ENCODE measurements at regions of chr1 and their contacts with region 1.

Region 1: DNA sequence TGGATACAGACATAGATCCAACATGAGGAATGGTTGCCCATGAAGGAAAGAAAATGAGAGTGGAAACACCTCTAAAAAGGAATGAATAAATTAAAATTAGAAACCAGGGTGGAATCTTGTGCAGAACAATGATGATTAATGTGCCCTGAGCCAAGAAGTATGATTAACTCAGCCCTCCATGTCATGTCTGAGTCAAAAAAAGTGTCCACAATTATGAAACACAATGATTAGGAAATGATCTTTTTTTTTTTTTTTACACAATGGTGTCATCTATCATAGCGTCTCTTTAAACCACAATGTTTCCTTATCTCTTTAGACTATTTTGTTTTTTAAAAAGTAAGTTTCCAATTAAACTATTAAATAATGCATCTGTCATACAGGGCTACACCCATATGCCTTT is 78.9 kb upstream of the RAB4A start:
- DNase-seq: peak; percentile 94
- H3K4me3 Mint-ChIP-seq: peak overlapping the region; percentile 35
- H3K27ac Mint-ChIP-seq: peak overlapping the region; percentile 80
- H3K4me1 Mint-ChIP-seq: peaks cover 41% of the 10 kb centered on the region
- H3K27me3 Mint-ChIP-seq: no peaks in the 10 kb centered on the region
- CTCF ChIP-seq: no peak

Region 2: DNA sequence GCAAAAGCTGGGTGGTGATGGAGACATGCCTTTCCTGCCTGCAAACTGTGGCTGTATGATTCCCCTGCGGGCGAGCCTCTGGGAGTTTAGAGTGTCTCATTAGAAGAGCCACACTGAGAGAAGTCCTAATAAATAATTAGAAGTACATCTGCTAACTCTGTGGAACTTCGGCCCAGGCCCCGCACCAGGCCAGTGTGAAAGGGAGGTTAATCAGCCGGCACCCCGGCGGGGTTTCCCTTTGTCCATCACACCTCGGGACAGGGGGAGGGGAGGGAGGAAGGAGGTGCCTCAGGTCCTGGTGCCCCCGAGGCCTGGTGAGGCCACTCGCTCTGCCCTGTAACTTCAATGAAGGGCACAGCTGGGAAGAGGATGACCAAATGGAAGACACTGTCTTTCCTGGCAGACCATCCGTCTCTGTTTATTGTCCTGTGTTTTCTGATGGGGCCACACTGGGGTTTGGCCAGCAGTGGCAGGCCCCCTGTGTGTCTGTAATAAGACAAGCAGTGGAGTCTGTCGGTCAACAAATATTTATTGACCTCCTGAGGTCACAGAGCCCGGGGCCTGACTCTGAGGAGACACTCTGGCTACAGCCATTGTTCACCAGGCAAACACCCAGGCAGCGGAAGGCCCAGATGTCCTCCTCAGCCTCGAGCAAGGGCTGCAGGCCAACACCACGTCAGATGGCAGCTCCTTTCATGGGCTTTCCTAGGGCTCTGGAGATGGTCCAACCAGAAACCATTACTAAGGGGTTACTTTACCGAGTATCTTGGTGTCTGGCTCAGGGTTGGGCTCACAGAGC is 188.6 kb before region 1 on chr1:
- CTCF ChIA-PET with region 1: no interaction called
- POLR2A ChIA-PET with region 1: no interaction called
- intact Hi-C with region 1: no loop called
- DNase-seq: peak; percentile 56
- H3K4me3 Mint-ChIP-seq: no peak overlapping the region
- H3K27ac Mint-ChIP-seq: no peak overlapping the region
- H3K4me1 Mint-ChIP-seq: peaks cover 19% of the 10 kb centered on the region
- H3K27me3 Mint-ChIP-seq: no peaks in the 10 kb centered on the region
- CTCF ChIP-seq: no peak

Region 3: DNA sequence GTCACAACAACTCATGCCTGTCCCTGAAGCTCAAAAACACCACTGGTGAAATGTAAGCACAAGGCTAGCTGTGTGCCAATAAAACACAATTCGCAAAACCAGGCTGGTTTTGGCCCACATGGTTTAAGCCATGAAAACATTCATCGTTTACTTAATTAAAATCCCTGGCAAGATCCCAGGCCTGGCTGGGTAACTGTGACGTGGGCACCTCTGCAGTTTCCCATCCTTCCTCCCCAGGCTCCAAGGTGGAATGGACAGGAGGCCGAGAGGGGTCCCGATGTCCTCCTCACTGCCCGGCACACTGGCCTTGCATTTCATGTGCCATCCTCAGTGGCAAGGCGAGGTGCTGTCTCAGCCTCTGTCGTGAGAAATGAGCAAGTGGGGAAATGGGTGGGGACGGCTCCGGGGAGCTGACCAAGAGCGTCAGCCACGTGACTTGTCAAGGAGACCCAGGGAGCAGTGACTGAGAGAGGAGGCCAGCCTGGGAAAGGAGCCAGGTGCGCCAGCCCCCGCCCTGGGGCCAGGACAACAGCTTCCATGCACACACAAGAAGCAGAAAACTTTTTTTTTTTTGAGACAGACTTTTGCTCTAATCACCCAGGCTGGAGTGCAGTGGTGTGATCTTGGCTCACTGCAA is 74.2 kb before region 1 on chr1:
- CTCF ChIA-PET with region 1: no interaction called
- POLR2A ChIA-PET with region 1: interaction called, 14 read pairs
- intact Hi-C with region 1: no loop called
- DNase-seq: peak; percentile 98
- H3K4me3 Mint-ChIP-seq: peak overlapping the region; percentile 15
- H3K27ac Mint-ChIP-seq: peak overlapping the region; percentile 55
- H3K4me1 Mint-ChIP-seq: peaks cover 26% of the 10 kb centered on the region
- H3K27me3 Mint-ChIP-seq: no peaks in the 10 kb centered on the region
- CTCF ChIP-seq: no peak

Region 4: GRCh38 chr1:229203030-229203751 is 11.2 kb after region 1 on chr1:
- CTCF ChIA-PET with region 1: interaction called, 3 read pairs
- POLR2A ChIA-PET with region 1: interaction called, 11 read pairs
- intact Hi-C with region 1: no loop called
- DNase-seq: peak; percentile 86
- H3K4me3 Mint-ChIP-seq: no peak overlapping the region
- H3K27ac Mint-ChIP-seq: no peak overlapping the region
- H3K4me1 Mint-ChIP-seq: no peaks in the 10 kb centered on the region
- H3K27me3 Mint-ChIP-seq: peaks cover 22% of the 10 kb centered on the region
- CTCF ChIP-seq: no peak

Region 5: GRCh38 chr1:229287267-229287666 is 95.2 kb after region 1 on chr1:
- CTCF ChIA-PET with region 1: no interaction called
- POLR2A ChIA-PET with region 1: no interaction called
- intact Hi-C with region 1: no loop called
- DNase-seq: peak; percentile 58
- H3K4me3 Mint-ChIP-seq: no peak overlapping the region
- H3K27ac Mint-ChIP-seq: no peak overlapping the region
- H3K4me1 Mint-ChIP-seq: peaks cover 32% of the 10 kb centered on the region
- H3K27me3 Mint-ChIP-seq: no peaks in the 10 kb centered on the region
- CTCF ChIP-seq: no peak

Region 6: DNA sequence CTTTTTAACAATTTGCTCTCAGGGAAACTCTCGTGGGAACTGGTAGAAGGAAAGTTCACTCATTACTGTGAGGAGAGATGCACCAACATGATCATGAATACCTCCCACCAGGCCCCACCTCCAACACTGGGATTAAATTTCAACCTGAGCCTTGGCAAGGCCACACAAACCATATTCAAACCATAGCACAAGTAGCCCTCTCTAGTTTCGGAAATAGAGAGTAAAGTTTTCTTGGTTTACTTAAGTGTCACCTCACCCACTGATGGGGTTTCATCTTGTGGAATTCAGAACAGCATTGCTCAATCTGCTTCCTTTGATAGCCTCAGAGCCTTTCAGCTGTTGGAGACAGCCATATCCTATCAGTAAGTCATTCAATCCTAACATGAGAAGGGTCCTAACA is 176.3 kb after region 1 on chr1:
- CTCF ChIA-PET with region 1: no interaction called
- POLR2A ChIA-PET with region 1: no interaction called
- intact Hi-C with region 1: no loop called
- DNase-seq: no peak
- H3K4me3 Mint-ChIP-seq: no peak overlapping the region
- H3K27ac Mint-ChIP-seq: no peak overlapping the region
- H3K4me1 Mint-ChIP-seq: peaks cover 21% of the 10 kb centered on the region
- H3K27me3 Mint-ChIP-seq: peaks cover 15% of the 10 kb centered on the region
- CTCF ChIP-seq: no peak

Region 7: GRCh38 chr1:229537894-229538293 is 345.9 kb after region 1 on chr1:
- CTCF ChIA-PET with region 1: no interaction called
- POLR2A ChIA-PET with region 1: no interaction called
- intact Hi-C with region 1: no loop called
- DNase-seq: no peak
- H3K4me3 Mint-ChIP-seq: no peak overlapping the region
- H3K27ac Mint-ChIP-seq: peak overlapping the region; percentile 29
- H3K4me1 Mint-ChIP-seq: no peaks in the 10 kb centered on the region
- H3K27me3 Mint-ChIP-seq: no peaks in the 10 kb centered on the region
- CTCF ChIP-seq: no peak

Measured in MCF 10A (cell line).